H1 (cell line): ENCODE measurements at regions of chr10 and their contacts with region 1.

Region 1: DNA sequence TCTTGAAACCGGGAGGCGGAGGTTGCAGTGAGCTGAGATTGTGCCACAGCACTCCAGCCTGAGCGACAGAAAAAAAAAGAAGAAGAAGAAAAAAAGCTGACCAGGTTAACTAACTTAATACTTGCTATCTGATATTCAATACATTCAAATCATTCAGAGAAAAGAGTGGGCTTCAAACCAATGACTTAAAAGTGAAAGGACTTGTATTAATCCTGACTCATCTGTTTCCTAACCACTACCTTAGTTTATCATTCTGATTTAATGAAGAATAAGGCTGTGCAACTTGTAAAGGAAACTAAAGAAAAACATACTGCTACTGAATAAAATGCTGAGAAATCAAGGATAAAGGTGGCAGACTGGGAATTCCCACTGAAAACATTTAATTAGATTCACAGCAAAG is 128.4 kb downstream of the NRBF2 start:
- DNase-seq: no peak
- H3K4me3 ChIP-seq: peak overlapping the region in 1 of 4 experiments; percentile 27; a peak in 1 of 8 replicates
- H3K27ac ChIP-seq: no peak overlapping the region
- H3K4me1 ChIP-seq: peaks cover 0 to 6% (median 0%) of the 10 kb centered on the region in 4 experiments; a peak in 1 of 7 replicates
- H3K27me3 ChIP-seq: no peaks in the 10 kb centered on the region
- CTCF ChIP-seq: no peak
- EP300 ChIP-seq: no peak
- POLR2A ChIP-seq: no peak
- RAD21 ChIP-seq: no peak

Region 2: GRCh38 chr10:62528441-62528840 is 733.1 kb before region 1 on chr10:
- CTCF ChIA-PET with region 1: no interaction called
- POLR2A ChIA-PET with region 1: no interaction called
- DNase-seq: no peak
- H3K4me3 ChIP-seq: no peak overlapping the region
- H3K27ac ChIP-seq: no peak overlapping the region
- H3K4me1 ChIP-seq: no peaks in the 10 kb centered on the region
- H3K27me3 ChIP-seq: no peaks in the 10 kb centered on the region
- CTCF ChIP-seq: no peak
- EP300 ChIP-seq: no peak
- POLR2A ChIP-seq: no peak
- RAD21 ChIP-seq: no peak

Region 3: DNA sequence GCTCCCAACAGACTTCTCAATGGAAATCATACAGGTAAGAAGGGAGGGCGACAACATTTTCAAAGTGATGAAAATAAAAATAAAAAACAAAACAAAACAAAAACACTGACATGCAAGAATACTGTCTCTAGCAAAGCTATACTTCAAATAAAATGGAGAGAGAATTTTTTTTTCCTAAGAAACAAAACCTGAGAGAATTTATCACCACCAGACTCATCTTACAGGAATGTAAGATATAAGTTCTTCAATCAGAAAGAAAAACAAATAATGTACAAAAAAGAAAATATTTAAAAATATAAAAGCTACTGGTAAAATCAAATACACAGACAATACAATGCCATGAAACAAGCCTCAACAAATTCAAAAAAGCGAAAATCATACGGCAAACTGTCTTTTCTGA is 15.1 kb before region 1 on chr10:
- CTCF ChIA-PET with region 1: interaction called, 4 read pairs
- POLR2A ChIA-PET with region 1: interaction called, 10 read pairs
- DNase-seq: no peak
- H3K4me3 ChIP-seq: no peak overlapping the region
- H3K27ac ChIP-seq: no peak overlapping the region
- H3K4me1 ChIP-seq: peaks cover 0 to 7% (median 4%) of the 10 kb centered on the region in 4 experiments; a peak in 5 of 7 replicates
- H3K27me3 ChIP-seq: no peaks in the 10 kb centered on the region
- CTCF ChIP-seq: no peak
- EP300 ChIP-seq: no peak
- POLR2A ChIP-seq: no peak
- RAD21 ChIP-seq: no peak

Region 4: GRCh38 chr10:63297941-63298340 is 36.4 kb after region 1 on chr10:
- CTCF ChIA-PET with region 1: no interaction called
- POLR2A ChIA-PET with region 1: no interaction called
- DNase-seq: no peak
- H3K4me3 ChIP-seq: no peak overlapping the region
- H3K27ac ChIP-seq: 0 out of 2 replicates have a peak overlapping the region, but pooled peaks have one; percentile 14
- H3K4me1 ChIP-seq: peaks cover 0 to 4% (median 0%) of the 10 kb centered on the region in 4 experiments; a peak in 1 of 7 replicates
- H3K27me3 ChIP-seq: no peaks in the 10 kb centered on the region
- CTCF ChIP-seq: no peak
- EP300 ChIP-seq: no peak
- POLR2A ChIP-seq: no peak
- RAD21 ChIP-seq: no peak